ENCODE measurements at regions of chr3 and their contacts with region 1.

Region 1: DNA sequence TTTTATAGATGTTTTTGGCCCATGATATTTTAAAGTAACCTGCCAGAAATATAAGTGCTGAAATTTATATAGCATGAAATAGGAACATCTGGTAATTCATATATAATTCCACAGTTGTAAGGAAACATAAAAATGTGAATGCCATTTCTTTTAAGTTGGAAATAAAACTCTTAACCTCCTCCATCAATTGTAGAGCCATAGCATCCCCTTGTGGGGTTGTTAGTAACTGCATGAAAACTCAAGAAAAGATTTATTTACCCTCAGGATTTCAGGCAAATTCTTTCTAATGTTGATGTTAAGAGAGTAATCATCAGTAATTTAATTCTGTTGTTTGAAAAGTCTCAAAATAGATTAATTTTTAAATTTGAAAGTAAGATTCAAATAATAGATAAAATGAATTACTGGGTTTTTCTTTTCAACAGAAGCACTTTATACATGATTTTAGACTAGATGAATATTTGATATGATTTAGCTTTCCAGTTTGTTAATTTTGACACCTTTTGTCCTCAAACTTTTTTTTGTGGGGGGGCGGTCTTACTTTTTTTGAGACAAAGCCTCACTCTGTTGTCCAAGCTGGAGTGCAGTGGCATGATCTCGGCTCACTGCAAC is 74.7 kb downstream of the RASA2 start:
- DNase-seq: peak; percentile 75
- ATAC-seq: peak; percentile 54
- H3K4me3 ChIP-seq: no peak overlapping the region
- H3K4me3 Mint-ChIP-seq: no peak overlapping the region
- H3K27ac ChIP-seq: peak overlapping the region in 1 of 2 donors; percentile 41
- H3K27ac Mint-ChIP-seq: no peak overlapping the region
- H3K4me1 ChIP-seq: peaks cover 11 to 13% of the 10 kb centered on the region in 2 donors
- H3K4me1 Mint-ChIP-seq: peaks cover 6% of the 10 kb centered on the region
- H3K27me3 ChIP-seq: no peaks in the 10 kb centered on the region
- H3K27me3 Mint-ChIP-seq: no peaks in the 10 kb centered on the region
- CTCF ChIP-seq: peak; percentile 100

Region 2: GRCh38 chr3:141360888-141361598 is 200.5 kb before region 1 on chr3:
- CTCF ChIA-PET with region 1: interaction called, 8 read pairs
- POLR2A ChIA-PET with region 1: no interaction called
- intact Hi-C with region 1: loop called (anchors 2 kb)
- DNase-seq: peak; percentile 54
- ATAC-seq: peak; percentile 65
- H3K4me3 ChIP-seq: no peak overlapping the region
- H3K4me3 Mint-ChIP-seq: peak overlapping the region; percentile 3
- H3K27ac ChIP-seq: no peak overlapping the region
- H3K27ac Mint-ChIP-seq: no peak overlapping the region
- H3K4me1 ChIP-seq: no peaks in the 10 kb centered on the region
- H3K4me1 Mint-ChIP-seq: no peaks in the 10 kb centered on the region
- H3K27me3 ChIP-seq: no peaks in the 10 kb centered on the region
- H3K27me3 Mint-ChIP-seq: no peaks in the 10 kb centered on the region
- CTCF ChIP-seq: peak; percentile 58

Region 3: DNA sequence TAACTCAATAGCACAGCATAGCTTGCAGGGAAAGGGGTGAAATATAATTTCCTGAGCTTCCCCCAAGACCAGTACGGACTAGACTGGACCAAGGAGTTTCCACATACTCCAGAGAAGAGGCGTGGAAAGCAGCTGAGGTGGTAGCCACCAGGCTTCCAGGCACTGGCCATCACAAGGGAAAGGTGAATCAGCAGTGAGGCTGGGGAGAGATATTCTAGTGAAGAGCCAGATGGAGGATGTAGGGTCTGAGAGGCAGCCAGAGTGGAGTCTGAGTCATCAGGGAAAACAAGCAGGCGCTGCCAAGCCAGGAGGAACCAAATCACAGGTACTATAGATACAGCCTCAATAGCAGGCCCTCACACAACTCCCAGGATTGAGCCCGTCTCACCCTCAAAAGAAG is 84.3 kb before region 1 on chr3:
- CTCF ChIA-PET with region 1: interaction called, 67 read pairs
- POLR2A ChIA-PET with region 1: no interaction called
- intact Hi-C with region 1: loop called (anchors 1 kb)
- DNase-seq: no peak
- ATAC-seq: no peak
- H3K4me3 ChIP-seq: no peak overlapping the region
- H3K4me3 Mint-ChIP-seq: no peak overlapping the region
- H3K27ac ChIP-seq: no peak overlapping the region
- H3K27ac Mint-ChIP-seq: peak overlapping the region; percentile 53
- H3K4me1 ChIP-seq: peaks cover 0 to 5% of the 10 kb centered on the region in 2 donors
- H3K4me1 Mint-ChIP-seq: peaks cover 17% of the 10 kb centered on the region
- H3K27me3 ChIP-seq: no peaks in the 10 kb centered on the region
- H3K27me3 Mint-ChIP-seq: no peaks in the 10 kb centered on the region
- CTCF ChIP-seq: no peak

Region 4: GRCh38 chr3:141487521-141488252 is 73.8 kb before region 1 on chr3:
- CTCF ChIA-PET with region 1: interaction called, 26 read pairs
- POLR2A ChIA-PET with region 1: interaction called, 3 read pairs
- intact Hi-C with region 1: no loop called
- DNase-seq: peak; percentile 91
- ATAC-seq: peak; percentile 70
- H3K4me3 ChIP-seq: peak overlapping the region; percentile 48 to 96 (median 67)
- H3K4me3 Mint-ChIP-seq: peak overlapping the region; percentile 88
- H3K27ac ChIP-seq: peak overlapping the region; percentile 83 to 91
- H3K27ac Mint-ChIP-seq: peak overlapping the region; percentile 93
- H3K4me1 ChIP-seq: peaks cover 45 to 66% of the 10 kb centered on the region in 2 donors
- H3K4me1 Mint-ChIP-seq: peaks cover 70% of the 10 kb centered on the region
- H3K27me3 ChIP-seq: no peaks in the 10 kb centered on the region
- H3K27me3 Mint-ChIP-seq: no peaks in the 10 kb centered on the region
- CTCF ChIP-seq: no peak